Activated T-helper 2 cell treated with anti-CD3 and anti-CD28 coated beads, Interferon-gamma antibody, Interleukin-2, Interleukin-4, amounts not matched to agents 10 μg/mL and 5 μg/mL and 100 μg/mL, durations not matched to agents 14 hours and 24 hours and 36 hours (primary cell): ENCODE measurements at regions of chr9 and their contacts with region 1.

Region 1: DNA sequence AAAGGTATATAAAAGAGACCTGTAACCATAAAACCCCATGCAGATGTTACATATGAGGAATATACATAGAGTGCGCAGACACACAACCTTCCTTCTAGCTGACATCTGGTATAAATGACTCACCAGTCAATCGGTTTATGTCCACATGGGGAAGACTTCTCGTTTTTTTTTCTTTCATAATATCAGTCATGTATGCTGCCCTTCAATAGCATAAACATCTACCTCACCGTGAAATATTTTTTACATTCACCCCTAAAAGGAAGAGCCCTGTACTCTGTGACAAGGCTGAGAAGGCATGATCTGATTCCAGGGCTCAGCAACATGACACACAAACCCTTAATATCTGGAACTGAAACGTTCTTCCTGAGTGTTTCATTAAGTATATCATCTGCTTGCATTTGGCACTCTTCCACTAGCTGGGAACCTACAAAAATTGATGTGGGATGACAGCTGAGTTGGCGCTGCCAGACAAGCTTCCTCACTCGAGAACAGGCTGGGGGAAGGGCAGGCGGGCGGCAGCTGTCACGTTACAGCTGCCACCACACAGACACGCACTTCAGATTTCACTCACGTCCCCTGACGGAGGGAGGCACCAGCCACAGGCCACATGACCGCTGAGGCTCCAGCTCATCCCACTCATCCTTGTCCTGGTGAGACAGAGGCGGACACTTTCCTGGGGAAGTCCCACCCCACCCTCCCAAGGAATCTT is 74.2 kb downstream of the SHB start:
- DNase-seq: peak; percentile 20
- H3K4me3 Mint-ChIP-seq: peak overlapping the region; percentile 49
- H3K27ac Mint-ChIP-seq: peak overlapping the region; percentile 89
- H3K4me1 Mint-ChIP-seq: peaks cover 28% of the 10 kb centered on the region
- H3K27me3 Mint-ChIP-seq: no peaks in the 10 kb centered on the region

Region 2: GRCh38 chr9:37953775-37954437 is 40.9 kb before region 1 on chr9:
- intact Hi-C with region 1: loop called (anchors 2 kb)
- DNase-seq: no peak
- H3K4me3 Mint-ChIP-seq: peak overlapping the region; percentile 22
- H3K27ac Mint-ChIP-seq: peak overlapping the region; percentile 96
- H3K4me1 Mint-ChIP-seq: peaks cover 30% of the 10 kb centered on the region
- H3K27me3 Mint-ChIP-seq: no peaks in the 10 kb centered on the region

Region 3: GRCh38 chr9:37979844-37980243 is 14.9 kb before region 1 on chr9:
- intact Hi-C with region 1: loop called (anchors 2 kb)
- DNase-seq: no peak
- H3K4me3 Mint-ChIP-seq: no peak overlapping the region
- H3K27ac Mint-ChIP-seq: no peak overlapping the region
- H3K4me1 Mint-ChIP-seq: peaks cover 2% of the 10 kb centered on the region
- H3K27me3 Mint-ChIP-seq: peaks cover 3% of the 10 kb centered on the region

Region 4: DNA sequence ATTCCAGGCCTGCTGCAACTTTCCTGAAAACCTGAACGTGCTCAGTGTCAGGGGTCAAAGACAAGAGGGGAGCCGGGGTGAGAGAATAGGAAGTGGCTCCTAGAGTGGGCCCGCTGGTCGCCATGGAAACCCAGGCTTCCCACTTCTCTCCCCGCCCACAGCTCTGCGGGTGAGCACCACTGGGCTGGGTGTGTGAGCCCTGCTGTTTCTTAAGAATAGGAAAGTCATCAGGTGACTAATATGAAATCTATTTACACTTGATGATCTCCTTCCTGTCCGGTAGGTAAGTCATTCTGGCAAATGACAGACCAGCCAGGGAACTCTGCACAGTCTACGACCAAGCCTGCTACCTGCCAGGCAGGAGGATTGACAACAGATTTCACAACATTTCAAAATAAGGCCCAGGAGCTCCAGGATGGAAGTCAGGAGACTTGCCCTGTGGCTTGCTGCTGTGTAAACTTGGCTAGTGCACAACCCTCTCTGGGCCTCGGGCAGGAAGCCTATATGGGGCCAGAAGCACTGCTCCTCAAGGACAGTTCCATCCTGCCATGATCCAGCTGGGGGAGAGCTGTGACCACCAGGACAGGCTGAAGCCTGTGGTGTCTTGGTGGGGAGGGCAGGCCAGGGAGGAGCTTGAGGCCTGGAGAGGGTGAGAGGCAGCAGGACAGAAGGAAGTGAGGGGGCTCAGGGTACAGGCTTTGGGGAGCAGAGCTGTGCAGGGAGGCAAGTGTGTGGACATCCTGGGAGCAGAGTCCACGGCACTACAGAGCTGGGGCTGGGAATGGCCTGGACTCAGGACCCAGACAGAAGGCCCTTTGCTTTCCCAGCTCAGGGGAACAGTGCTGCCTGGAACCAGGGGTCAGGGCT is 13.6 kb after region 1 on chr9:
- intact Hi-C with region 1: loop called (anchors 2 kb)
- DNase-seq: no peak
- H3K4me3 Mint-ChIP-seq: peak overlapping the region; percentile 45
- H3K27ac Mint-ChIP-seq: peak overlapping the region; percentile 93
- H3K4me1 Mint-ChIP-seq: peaks cover 29% of the 10 kb centered on the region
- H3K27me3 Mint-ChIP-seq: no peaks in the 10 kb centered on the region

Region 5: DNA sequence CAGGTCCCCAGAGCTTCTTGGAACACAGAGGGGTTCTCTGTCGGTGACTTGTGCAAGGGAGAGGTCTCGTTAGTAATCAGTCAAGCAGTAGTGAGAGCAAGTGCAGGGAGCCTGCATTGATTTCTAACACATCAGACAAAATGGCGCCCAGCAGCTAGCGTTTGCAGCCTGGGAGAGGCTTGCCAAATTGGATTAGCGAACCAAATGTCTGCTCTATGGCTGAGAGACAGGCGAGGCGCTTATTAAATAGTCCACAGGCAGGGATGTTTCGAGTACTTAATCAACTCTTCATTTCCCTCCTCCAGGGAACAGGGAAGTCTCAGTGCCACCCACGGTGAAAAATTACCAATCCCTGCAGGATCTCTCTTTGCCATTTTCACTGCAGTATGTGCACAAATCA is 205.6 kb after region 1 on chr9:
- intact Hi-C with region 1: no loop called
- DNase-seq: no peak
- H3K4me3 Mint-ChIP-seq: no peak overlapping the region
- H3K27ac Mint-ChIP-seq: no peak overlapping the region
- H3K4me1 Mint-ChIP-seq: no peaks in the 10 kb centered on the region
- H3K27me3 Mint-ChIP-seq: no peaks in the 10 kb centered on the region